ENCODE measurements at regions of chr10 and their contacts with region 1.

Region 1: GRCh38 chr10:119673271-119673670 is 22.1 kb downstream of the BAG3 start:
- DNase-seq: no peak
- ATAC-seq: no peak
- H3K4me3 ChIP-seq: no peak overlapping the region
- H3K27ac ChIP-seq: no peak overlapping the region; the same call in 1 of the 2 replicates
- H3K4me1 ChIP-seq: peaks cover 13% of the 10 kb centered on the region
- H3K27me3 ChIP-seq: no peaks in the 10 kb centered on the region
- CTCF ChIP-seq: no peak
- POLR2A ChIP-seq: no peak
- RAD21 ChIP-seq: no peak

Region 2: DNA sequence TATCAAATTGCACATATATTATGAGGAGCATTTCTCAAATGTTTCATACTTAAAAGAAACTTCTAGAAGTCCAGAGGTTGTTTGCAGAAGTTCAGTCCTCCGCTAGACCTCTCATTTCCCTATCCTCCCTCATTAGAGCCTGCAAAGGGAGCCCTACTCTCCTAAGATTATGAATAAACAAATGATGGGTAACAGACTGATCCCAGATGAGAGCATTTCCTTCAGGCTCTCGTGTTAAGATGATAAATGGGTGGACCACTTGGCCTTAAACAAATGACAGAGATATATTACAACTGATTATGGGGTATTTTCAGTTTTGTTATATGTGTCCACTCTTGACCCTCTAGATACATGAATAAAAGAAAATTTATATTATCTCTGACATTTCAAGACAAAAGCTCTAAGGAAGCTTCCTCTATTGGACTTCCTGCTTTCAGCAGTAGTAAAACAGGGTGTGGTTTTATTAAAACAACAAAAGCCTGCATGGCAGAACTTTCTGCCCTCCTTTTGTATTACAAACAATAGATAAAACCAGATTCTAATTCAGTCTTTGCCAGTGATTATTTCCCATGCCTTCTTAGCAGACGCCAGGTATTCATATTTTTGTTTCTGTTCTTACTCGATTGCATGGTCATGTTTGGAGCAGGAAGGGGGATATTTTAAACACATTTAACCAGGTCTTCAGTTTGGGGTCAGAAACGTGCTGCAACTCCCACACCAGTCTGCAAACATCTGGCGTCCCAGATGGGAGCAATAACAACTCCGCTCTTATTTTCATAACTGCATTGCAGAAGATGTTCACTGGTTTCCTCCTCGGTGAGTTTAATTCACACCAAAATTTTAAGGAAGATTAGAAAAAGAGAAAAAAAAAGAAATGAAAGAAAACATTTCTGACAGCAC is 1278.7 kb before region 1 on chr10:
- CTCF ChIA-PET with region 1: no interaction called
- POLR2A ChIA-PET with region 1: no interaction called
- dilution Hi-C with region 1: no loop called
- in situ Hi-C with region 1: no loop called
- intact Hi-C with region 1: no loop called
- DNase-seq: no peak
- ATAC-seq: no peak
- H3K4me3 ChIP-seq: no peak overlapping the region
- H3K27ac ChIP-seq: no peak overlapping the region
- H3K4me1 ChIP-seq: no peaks in the 10 kb centered on the region
- H3K27me3 ChIP-seq: no peaks in the 10 kb centered on the region
- CTCF ChIP-seq: no peak
- POLR2A ChIP-seq: no peak
- RAD21 ChIP-seq: no peak

Region 3: DNA sequence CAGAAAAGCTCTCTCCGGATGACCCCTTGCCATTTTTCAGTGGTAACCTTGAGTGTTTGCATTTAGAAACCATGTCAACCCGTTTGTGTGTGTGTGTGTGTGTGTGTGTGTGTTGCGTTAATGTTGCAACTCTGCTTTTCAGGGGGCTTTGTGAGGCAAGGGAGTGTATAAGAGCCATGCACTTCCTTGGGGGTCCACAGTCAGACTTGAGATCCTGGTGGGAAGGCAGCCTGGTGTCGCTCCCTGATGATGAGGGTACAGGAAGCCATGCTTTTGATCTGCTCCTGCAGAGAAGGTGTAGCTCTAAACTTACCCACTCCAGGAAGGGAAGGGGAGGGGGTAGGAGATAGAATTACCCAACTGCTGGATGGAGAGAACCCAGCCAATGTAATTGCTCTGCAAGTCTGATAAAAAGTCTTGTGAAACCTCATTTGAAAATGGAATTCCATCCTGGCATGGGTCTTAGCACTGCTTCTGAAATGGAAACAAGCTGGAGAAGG is 455.2 kb before region 1 on chr10:
- CTCF ChIA-PET with region 1: no interaction called
- POLR2A ChIA-PET with region 1: no interaction called
- dilution Hi-C with region 1: no loop called
- in situ Hi-C with region 1: no loop called
- intact Hi-C with region 1: no loop called
- DNase-seq: peak; percentile 69
- ATAC-seq: peak; percentile 52
- H3K4me3 ChIP-seq: no peak overlapping the region
- H3K27ac ChIP-seq: peak overlapping the region; percentile 51; the same call in 1 of the 2 replicates
- H3K4me1 ChIP-seq: peaks cover 38% of the 10 kb centered on the region
- H3K27me3 ChIP-seq: no peaks in the 10 kb centered on the region
- CTCF ChIP-seq: no peak
- POLR2A ChIP-seq: no peak
- RAD21 ChIP-seq: no peak

Region 4: GRCh38 chr10:119542988-119543813 is 130.1 kb before region 1 on chr10:
- CTCF ChIA-PET with region 1: no interaction called
- POLR2A ChIA-PET with region 1: no interaction called
- dilution Hi-C with region 1: no loop called
- in situ Hi-C with region 1: no loop called
- intact Hi-C with region 1: no loop called
- DNase-seq: peak; percentile 49
- ATAC-seq: peak; percentile 58
- H3K4me3 ChIP-seq: peak overlapping the region; percentile 81
- H3K27ac ChIP-seq: peak overlapping the region; percentile 43
- H3K4me1 ChIP-seq: peaks cover 20% of the 10 kb centered on the region
- H3K27me3 ChIP-seq: no peaks in the 10 kb centered on the region; the same call in 1 of the 2 replicates
- CTCF ChIP-seq: peak; percentile 56
- POLR2A ChIP-seq: no peak; the same call in 1 of the 2 replicates
- RAD21 ChIP-seq: peak; percentile 54

Region 5: DNA sequence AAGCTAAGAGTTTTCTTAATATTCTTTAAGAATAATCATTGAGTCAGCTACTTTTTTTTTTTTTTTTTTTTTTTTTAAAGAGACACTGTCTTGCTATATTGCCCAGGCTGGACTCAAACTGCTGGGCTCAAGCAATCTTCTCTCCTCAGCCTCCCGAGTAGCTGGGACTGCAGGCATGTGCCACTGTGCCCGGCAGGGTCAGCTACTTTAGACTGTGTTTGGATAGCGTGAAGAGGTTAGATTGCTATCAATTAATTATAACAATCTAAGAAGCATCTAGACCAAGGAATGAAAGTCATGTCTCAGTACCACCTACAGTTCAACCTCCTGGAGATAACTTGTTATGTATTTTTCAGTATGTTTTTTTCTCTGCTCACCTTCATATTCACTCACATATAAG is 125.5 kb after region 1 on chr10:
- CTCF ChIA-PET with region 1: no interaction called
- POLR2A ChIA-PET with region 1: interaction called, 18 read pairs
- dilution Hi-C with region 1: no loop called
- in situ Hi-C with region 1: no loop called
- intact Hi-C with region 1: no loop called
- DNase-seq: no peak
- ATAC-seq: no peak
- H3K4me3 ChIP-seq: no peak overlapping the region
- H3K27ac ChIP-seq: no peak overlapping the region
- H3K4me1 ChIP-seq: no peaks in the 10 kb centered on the region; the same call in 1 of the 2 replicates
- H3K27me3 ChIP-seq: no peaks in the 10 kb centered on the region
- CTCF ChIP-seq: no peak
- POLR2A ChIP-seq: no peak
- RAD21 ChIP-seq: no peak